Heart left ventricle (tissue), 16 donors: ENCODE measurements at regions of chr6 and their contacts with region 1.

Region 1: DNA sequence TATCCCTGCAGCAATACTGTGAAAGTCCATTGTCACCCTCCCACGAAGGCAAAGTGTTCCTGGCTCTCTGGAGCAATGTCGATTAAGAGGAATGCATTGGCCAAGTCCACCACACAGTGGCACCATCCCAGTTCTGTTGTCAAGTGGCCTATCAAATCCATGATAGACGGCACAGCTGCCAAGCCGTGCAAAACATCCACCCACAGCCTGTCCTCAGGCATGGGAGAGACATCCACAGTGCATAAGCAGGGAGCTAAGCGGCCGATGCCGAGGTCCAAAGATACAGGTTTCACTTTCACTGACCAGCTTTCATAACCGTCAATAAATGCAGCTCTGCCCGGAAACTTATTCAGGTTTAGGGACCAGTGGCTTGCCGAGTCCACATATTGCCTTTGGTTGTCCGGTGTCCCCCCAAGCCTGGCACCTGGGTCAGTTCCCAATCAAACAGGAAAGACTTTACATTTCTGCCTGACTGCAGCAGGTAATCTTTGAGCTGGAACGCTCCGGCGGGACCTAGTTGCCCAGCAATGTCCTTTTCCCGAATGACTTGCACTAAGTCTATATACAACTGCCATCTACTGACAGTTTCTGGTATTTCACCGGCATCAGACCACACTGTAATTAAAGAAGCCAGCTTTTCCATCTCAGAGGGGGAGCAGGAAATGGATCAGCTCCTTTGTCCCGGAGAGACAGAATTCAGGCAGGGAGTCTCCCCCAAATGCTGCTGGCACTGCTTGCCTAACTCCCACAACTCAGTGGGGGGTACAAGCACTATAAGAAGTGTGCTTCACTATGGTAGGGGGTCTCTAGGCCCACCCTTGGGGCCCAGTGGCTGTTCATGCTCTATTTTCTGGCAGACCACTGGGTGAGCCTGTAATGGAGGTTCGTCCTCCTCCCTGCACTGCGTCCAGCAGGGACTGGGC is 6.3 kb downstream of the ZKSCAN3 start:
- DNase-seq: peak; percentile 67 to 84 (median 80)
- ATAC-seq: peak; percentile 86 to 90 (median 89)
- H3K4me3 ChIP-seq: peak overlapping the region; percentile 20 to 86 (median 67)
- H3K27ac ChIP-seq: peak overlapping the region; percentile 72 to 91 (median 89)
- H3K4me1 ChIP-seq: peaks cover 3 to 42% (median 29%) of the 10 kb centered on the region in 12 donors
- H3K27me3 ChIP-seq: no peaks in the 10 kb centered on the region
- CTCF ChIP-seq: peak; percentile 71 to 91 (median 80)
- POLR2A ChIP-seq: no peak

Region 2: DNA sequence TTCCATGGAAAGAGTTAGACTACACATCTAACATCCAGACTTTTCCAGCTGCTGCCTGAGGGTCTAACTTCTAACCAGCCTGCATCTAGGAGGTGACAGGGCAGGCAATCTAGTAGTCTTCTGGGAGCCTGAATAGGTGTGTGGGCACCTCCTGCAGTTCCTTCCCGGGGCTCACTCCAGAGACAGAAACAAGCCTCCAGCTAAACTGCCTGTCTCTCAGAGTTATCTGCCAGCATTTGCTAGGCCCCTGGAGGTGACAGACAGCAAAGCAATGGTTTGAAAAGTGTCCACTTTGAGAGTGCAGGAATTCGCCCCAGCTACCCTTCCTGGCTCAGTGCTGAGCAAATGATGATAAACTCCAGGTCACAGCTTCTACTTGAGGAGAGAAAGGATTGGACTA is 1349.0 kb before region 1 on chr6:
- intact Hi-C with region 1: no loop called
- DNase-seq: no peak
- ATAC-seq: no peak
- H3K4me3 ChIP-seq: no peak overlapping the region
- H3K27ac ChIP-seq: no peak overlapping the region
- H3K4me1 ChIP-seq: no peaks in the 10 kb centered on the region
- H3K27me3 ChIP-seq: no peaks in the 10 kb centered on the region
- CTCF ChIP-seq: no peak
- POLR2A ChIP-seq: no peak

Region 3: GRCh38 chr6:28080631-28081485 is 275.1 kb before region 1 on chr6:
- intact Hi-C with region 1: loop called in 2 of 10 experiments (anchors 5 kb)
- DNase-seq: peak; percentile 94 to 97 (median 95)
- ATAC-seq: peak; percentile 97 to 99 (median 99)
- H3K4me3 ChIP-seq: peak overlapping the region; percentile 56 to 94 (median 77)
- H3K27ac ChIP-seq: peak overlapping the region; percentile 59 to 91 (median 86)
- H3K4me1 ChIP-seq: peaks cover 0 to 16% (median 6%) of the 10 kb centered on the region in 12 donors
- H3K27me3 ChIP-seq: no peaks in the 10 kb centered on the region
- CTCF ChIP-seq: peak in 1 of 12 donors; percentile 6
- POLR2A ChIP-seq: peak in 1 of 2 donors; percentile 48

Region 4: DNA sequence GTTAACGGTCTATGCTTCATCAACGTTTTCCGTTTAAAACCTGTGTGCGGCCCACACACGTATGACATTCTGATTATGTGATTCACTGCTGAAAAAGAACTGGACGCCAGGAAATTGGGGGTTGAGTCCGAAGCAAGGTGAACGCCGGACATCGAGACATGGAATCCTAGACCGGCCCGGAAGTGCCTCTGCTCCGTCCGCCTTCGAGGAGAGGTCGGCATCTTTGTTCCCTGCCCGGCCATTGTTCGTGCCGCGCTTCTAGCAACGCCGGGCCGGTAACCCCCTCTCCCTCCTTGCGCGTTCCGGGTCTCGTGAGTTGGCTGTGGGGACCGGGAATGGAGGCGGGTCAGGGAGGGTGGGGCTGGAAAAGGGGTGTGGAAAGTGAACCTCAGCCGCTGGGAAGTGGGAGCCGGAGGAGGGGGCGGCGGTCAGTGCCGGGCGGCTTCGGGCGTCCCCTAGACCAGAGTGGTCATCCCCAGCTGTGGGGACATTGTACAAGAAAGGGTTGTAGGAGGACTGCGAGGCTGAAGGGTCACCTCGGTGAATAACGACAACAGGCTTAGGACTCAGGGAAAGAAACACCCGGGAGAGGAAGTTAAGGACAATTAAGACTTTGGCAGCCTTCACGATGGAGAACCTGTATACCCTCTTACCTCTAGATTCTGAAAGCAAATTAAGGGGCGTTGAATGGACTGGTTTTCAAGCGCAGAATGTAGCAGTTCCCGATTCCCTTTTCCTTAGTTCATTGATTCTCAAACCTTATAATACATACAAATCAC is 130.8 kb before region 1 on chr6 and contains the start of gene ZSCAN9:
- intact Hi-C with region 1: loop called in 1 of 10 experiments (anchors 5 kb)
- DNase-seq: peak; percentile 85 to 92 (median 89)
- ATAC-seq: peak; percentile 96 to 99 (median 98)
- H3K4me3 ChIP-seq: peak within 1 kb of the TSS; percentile 70 to 93 (median 78)
- H3K27ac ChIP-seq: peak within 1 kb of the TSS; percentile 3 to 87 (median 82)
- H3K4me1 ChIP-seq: peaks cover 0 to 26% (median 12%) of the 10 kb centered on the region in 12 donors
- H3K27me3 ChIP-seq: peaks cover 0 to 19% (median 7%) of the 10 kb centered on the region in 9 donors
- CTCF ChIP-seq: no peak
- POLR2A ChIP-seq: no peak
- total RNA-seq, gene ZSCAN9: 6.8 to 12.6 (median 7.9) TPM

Region 5: GRCh38 chr6:28252009-28252975 is 103.7 kb before region 1 on chr6 and contains the start of gene ZKSCAN4:
- intact Hi-C with region 1: loop called in 4 of 10 experiments (anchors 2 to 10 kb)
- DNase-seq: peak; percentile 72 to 90 (median 84)
- ATAC-seq: peak; percentile 96 to 99 (median 98)
- H3K4me3 ChIP-seq: peak within 1 kb of the TSS; percentile 54 to 87 (median 78)
- H3K27ac ChIP-seq: peak within 1 kb of the TSS in 11 of 12 donors; percentile 9 to 83 (median 58)
- H3K4me1 ChIP-seq: peaks cover 6 to 32% (median 15%) of the 10 kb centered on the region in 12 donors
- H3K27me3 ChIP-seq: no peaks in the 10 kb centered on the region
- CTCF ChIP-seq: no peak
- POLR2A ChIP-seq: no peak
- total RNA-seq, gene ZKSCAN4: 2.1 to 5.0 (median 2.5) TPM

Region 6: DNA sequence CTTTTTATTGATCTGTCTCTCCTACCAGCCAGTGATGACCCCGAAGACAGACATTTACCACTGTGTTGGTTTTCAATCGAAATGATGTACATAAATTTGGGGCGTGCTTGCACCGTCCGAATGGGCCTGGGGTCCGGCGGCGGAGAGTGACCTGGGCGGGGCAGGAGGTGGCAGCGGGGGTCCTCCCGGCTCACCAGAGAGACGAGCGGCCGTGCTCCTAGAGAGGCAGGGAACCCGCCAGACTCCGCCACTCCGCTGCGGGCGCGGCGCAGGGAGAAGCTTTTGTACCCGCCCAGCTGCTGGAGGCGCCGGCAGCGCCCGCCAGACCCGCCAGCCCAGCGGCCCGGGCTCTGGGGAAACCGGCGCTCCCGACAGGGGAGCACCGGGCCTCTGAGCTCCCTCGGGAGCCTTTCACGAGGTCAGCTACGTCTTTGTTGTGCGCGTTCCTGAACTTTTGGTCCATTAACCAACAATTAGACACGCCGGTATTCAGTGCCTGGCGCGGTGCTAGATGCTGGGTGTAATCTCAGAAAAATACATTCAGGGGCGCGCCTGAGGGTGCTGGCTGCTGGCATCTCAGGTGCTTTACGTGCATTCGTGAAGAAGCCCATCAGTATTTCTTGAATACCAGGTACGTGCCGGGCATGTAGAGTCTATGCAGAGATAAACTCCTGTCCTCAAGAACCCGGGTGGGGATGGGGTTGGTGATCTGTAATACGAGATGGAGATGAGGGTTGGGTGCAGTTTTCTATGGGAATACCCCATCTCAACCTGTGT is 74.5 kb before region 1 on chr6 and contains the start of gene PGBD1:
- intact Hi-C with region 1: loop called in 2 of 10 experiments (anchors 5 kb)
- DNase-seq: peak; percentile 73 to 90 (median 88)
- ATAC-seq: peak; percentile 68 to 99 (median 96)
- H3K4me3 ChIP-seq: peak within 1 kb of the TSS; percentile 59 to 88 (median 74)
- H3K27ac ChIP-seq: peak within 1 kb of the TSS in 9 of 12 donors; percentile 29 to 76 (median 57)
- H3K4me1 ChIP-seq: peaks cover 0 to 18% (median 7%) of the 10 kb centered on the region in 12 donors
- H3K27me3 ChIP-seq: no peaks in the 10 kb centered on the region
- CTCF ChIP-seq: no peak
- POLR2A ChIP-seq: peak in 1 of 2 donors; percentile 47
- total RNA-seq, gene PGBD1: 2.5 to 3.8 (median 2.9) TPM